ENCODE measurements at regions of chr4 and their contacts with region 1.

Region 1: GRCh38 chr4:19429684-19430083 is 822.0 kb upstream of the SLIT2 start:
- DNase-seq: peak; percentile 54 to 56
- H3K4me3 ChIP-seq: no peak overlapping the region
- H3K4me3 Mint-ChIP-seq: no peak overlapping the region
- H3K27ac Mint-ChIP-seq: no peak overlapping the region
- H3K4me1 ChIP-seq: peaks cover 19% of the 10 kb centered on the region
- H3K4me1 Mint-ChIP-seq: peaks cover 7% of the 10 kb centered on the region
- H3K27me3 ChIP-seq: no peaks in the 10 kb centered on the region
- H3K27me3 Mint-ChIP-seq: no peaks in the 10 kb centered on the region
- CTCF ChIP-seq: no peak

Region 2: GRCh38 chr4:19239565-19239964 is 190.1 kb before region 1 on chr4:
- CTCF ChIA-PET with region 1: no interaction called
- POLR2A ChIA-PET with region 1: no interaction called
- intact Hi-C with region 1: no loop called
- DNase-seq: no peak
- H3K4me3 ChIP-seq: no peak overlapping the region
- H3K4me3 Mint-ChIP-seq: no peak overlapping the region
- H3K27ac Mint-ChIP-seq: no peak overlapping the region
- H3K4me1 ChIP-seq: no peaks in the 10 kb centered on the region
- H3K4me1 Mint-ChIP-seq: peaks cover 7% of the 10 kb centered on the region
- H3K27me3 ChIP-seq: no peaks in the 10 kb centered on the region
- H3K27me3 Mint-ChIP-seq: peaks cover 2% of the 10 kb centered on the region
- CTCF ChIP-seq: no peak

Region 3: GRCh38 chr4:19358015-19358414 is 71.7 kb before region 1 on chr4:
- CTCF ChIA-PET with region 1: no interaction called
- POLR2A ChIA-PET with region 1: no interaction called
- intact Hi-C with region 1: no loop called
- DNase-seq: no peak
- H3K4me3 ChIP-seq: no peak overlapping the region
- H3K4me3 Mint-ChIP-seq: no peak overlapping the region
- H3K27ac Mint-ChIP-seq: no peak overlapping the region
- H3K4me1 ChIP-seq: no peaks in the 10 kb centered on the region; the same call in 1 of the 2 replicates
- H3K4me1 Mint-ChIP-seq: no peaks in the 10 kb centered on the region
- H3K27me3 ChIP-seq: no peaks in the 10 kb centered on the region
- H3K27me3 Mint-ChIP-seq: no peaks in the 10 kb centered on the region
- CTCF ChIP-seq: no peak

Region 4: DNA sequence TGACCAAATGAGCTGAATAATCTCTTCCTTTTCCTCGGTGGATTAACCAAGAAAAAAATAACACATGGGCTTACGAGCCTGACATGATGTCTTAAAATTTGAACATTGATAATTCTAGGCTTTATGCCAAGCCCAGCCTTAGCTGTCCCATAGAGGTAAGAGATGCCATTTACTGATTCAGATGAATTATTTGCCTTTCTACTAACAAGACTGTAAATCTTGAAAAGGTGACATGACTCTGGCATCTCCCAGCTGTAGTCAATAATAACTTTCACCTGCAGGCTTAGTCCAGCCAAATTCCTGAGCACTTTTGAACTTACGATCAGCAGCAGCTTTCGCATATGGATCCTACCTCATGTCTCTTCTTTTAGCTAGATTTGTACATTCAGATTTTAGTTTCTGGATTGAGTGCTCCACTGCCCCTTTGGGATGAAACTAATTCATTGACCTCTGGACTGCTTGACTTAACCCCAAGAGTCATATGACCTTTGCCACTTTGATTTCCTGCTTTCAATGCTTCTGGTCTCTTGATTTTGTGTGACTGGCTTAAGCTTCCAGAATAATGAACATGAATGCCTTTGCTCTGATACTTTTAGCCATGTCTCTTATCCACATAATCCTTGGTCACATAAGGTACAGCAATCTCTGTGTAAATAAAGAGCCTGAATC is 54.4 kb before region 1 on chr4:
- CTCF ChIA-PET with region 1: no interaction called
- POLR2A ChIA-PET with region 1: no interaction called
- intact Hi-C with region 1: loop called (anchors 1 kb)
- DNase-seq: peak in 1 of 2 experiments; percentile 44
- H3K4me3 ChIP-seq: no peak overlapping the region
- H3K4me3 Mint-ChIP-seq: no peak overlapping the region
- H3K27ac Mint-ChIP-seq: peak overlapping the region; percentile 33
- H3K4me1 ChIP-seq: peaks cover 13% of the 10 kb centered on the region
- H3K4me1 Mint-ChIP-seq: peaks cover 10% of the 10 kb centered on the region
- H3K27me3 ChIP-seq: no peaks in the 10 kb centered on the region
- H3K27me3 Mint-ChIP-seq: no peaks in the 10 kb centered on the region
- CTCF ChIP-seq: no peak